ENCODE measurements at regions of chr12 and their contacts with region 1.

Region 1: DNA sequence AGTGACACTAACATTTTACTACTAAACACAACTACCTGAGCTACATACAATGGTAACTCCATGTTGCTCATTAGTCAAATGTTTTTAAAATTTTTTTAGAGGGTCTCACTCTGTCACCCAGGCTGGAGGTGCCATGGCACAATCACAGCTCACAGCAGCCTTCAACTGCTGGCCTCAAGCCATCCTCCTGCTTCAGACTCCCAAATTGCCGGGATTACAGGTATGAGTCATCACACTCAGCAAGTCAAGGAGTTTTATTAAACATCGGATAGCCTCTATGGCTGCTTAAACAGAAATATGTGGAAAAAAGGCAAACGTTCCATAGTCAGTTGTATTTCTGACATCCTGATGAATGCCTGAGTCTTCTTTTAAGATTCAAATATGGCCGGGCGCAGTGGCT is 11.1 kb upstream of the NPFF start:
- DNase-seq: no peak
- H3K4me3 ChIP-seq: no peak overlapping the region
- H3K27ac ChIP-seq: no peak overlapping the region
- H3K4me1 ChIP-seq: no peaks in the 10 kb centered on the region
- H3K27me3 ChIP-seq: no peaks in the 10 kb centered on the region
- CTCF ChIP-seq: no peak

Region 2: DNA sequence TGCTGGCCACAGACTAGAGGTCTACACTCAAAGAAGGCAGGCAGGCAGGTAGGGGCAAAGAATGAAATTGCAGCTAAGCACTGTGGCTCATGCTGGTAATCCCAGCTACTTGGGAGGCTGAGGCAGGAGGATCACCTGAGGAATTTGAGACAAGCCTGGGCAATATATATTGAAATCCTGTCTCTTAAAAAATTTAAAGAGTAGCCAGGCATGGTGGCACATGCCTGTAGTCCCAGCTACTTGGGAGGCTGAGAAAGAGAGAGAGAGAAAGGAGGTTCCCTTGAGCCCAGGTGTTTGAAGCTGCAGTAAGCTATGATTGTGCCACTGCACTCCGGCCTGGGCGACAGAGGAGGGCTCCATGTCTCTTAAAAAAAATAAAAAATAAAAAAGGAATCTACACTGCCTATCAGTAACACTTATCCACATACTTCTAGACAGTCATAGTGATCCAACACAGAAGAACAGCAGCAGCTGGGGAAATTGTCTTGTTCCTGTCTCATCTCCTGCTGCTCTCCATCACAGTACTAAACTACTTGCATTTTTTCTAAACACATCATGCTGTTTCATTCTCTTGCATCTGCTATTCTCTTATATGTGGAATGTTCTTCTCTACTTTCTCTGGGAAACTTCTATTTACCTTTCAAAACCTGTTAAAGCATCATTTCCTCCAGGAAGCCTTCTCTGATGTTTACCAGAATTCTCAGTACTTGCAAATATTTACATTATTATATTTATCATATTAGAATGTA is 50.6 kb after region 1 on chr12:
- CTCF ChIA-PET with region 1: no interaction called
- dilution Hi-C with region 1: loop called (anchors 5 kb)
- in situ Hi-C with region 1: no loop called
- intact Hi-C with region 1: no loop called
- DNase-seq: no peak
- H3K4me3 ChIP-seq: no peak overlapping the region
- H3K27ac ChIP-seq: no peak overlapping the region
- H3K4me1 ChIP-seq: peaks cover 6% of the 10 kb centered on the region
- H3K27me3 ChIP-seq: no peaks in the 10 kb centered on the region
- CTCF ChIP-seq: no peak

Region 3: DNA sequence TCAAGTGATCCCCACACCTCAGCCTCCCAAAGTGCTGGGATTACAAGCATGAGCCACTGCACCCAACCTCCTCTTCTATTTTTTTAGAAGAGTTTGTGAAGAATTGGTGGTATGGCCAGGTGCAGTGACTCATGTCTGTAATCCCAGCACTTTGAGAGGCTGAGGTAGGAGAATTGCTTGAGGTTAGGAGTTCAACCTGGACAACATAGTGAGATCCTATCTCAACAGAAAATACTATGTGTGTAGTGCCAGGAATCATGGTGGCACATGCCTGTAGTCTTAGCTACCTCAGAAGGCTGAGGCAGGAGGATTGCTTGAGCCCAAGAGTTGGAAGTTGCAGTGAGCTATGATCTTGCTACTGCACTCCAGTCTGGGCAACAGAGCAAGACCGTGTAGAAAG is 113.3 kb after region 1 on chr12:
- CTCF ChIA-PET with region 1: no interaction called
- dilution Hi-C with region 1: loop called (anchors 5 kb)
- in situ Hi-C with region 1: no loop called
- intact Hi-C with region 1: no loop called
- DNase-seq: no peak
- H3K4me3 ChIP-seq: no peak overlapping the region
- H3K27ac ChIP-seq: no peak overlapping the region
- H3K4me1 ChIP-seq: peaks cover 2% of the 10 kb centered on the region
- H3K27me3 ChIP-seq: no peaks in the 10 kb centered on the region
- CTCF ChIP-seq: no peak

Measured in mammary epithelial cell (primary cell).